SK-N-SH (cell line): ENCODE measurements at regions of chr9 and their contacts with region 1.

Region 1: DNA sequence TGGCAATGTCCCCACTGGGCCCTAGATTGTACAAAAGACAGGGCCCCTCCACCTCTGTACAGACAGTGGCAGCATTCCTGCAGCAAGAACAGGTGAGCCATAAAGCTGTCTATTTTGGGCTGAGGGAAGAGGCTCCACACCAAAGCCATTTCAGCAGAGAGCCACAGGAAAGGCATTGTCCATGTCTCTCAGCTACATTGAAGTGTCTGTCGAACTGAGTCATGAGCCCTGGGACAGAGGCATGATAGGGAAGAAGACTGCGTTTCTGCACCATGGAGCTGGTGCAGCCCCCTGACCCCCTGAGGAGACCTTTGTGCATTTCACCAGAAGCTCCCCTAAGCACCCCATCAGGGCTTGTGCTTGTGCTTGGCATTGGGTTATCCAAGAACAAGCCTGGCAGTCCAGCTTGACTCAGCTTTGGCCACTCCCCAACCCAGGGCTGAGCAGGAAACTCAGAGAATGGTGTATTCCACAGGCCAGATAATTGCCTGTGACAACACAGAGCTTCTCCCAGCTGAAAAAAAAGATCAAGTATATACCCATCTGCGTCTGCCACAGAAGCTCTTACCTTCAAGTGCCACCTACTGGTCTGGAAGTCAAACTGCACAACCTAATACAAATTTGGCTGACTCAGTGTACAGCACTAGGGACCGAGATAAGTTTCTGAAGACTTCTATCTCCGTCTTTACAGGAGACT is 5.9 kb upstream of the FRMD3 start:
- DNase-seq: peak; percentile 56
- H3K4me3 ChIP-seq: no peak overlapping the region; a peak in 1 of 4 replicates
- H3K27ac ChIP-seq: no peak overlapping the region
- H3K4me1 ChIP-seq: peaks cover 0 to 8% of the 10 kb centered on the region in 2 experiments; a peak in 1 of 4 replicates
- H3K27me3 ChIP-seq: no peaks in the 10 kb centered on the region
- CTCF ChIP-seq: peak; percentile 84
- EP300 ChIP-seq: no peak
- RAD21 ChIP-seq: peak; percentile 90

Region 2: DNA sequence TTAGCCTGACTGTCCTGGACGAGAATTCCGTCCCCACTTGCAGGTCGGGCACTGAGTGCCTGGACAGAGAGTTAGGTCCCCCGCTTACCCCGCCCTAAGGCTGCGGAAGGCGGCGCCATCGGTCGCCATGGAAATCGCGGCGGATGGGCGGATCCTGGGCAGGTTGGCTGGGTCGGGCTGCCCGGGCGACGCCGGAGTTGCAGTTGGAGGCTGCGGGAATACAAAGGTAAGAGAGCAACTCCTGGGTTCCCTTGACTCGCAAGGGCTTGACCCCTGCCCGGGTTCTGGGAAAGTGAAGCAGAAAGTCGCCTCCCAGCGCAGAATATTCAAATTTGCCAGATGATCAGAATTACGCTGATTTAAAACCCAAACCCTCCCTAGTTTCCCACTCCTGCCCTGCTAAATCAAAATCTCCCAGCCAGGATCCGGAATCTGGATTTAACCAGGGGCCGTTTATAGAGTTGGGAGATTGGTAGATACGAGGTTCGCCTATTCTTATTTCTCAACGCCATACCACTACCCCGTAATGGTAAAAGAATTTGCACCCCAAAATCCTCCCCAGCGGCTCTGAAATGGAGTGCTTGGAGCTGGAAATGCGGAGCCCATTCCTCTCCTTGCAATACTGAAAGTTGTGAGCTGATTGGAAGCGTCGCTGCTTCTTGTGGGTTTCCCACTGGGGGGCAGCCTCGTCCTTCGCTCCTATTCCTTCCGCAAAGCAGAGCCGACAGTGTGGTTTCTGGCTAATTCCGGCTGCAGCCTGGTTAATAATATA is 324.8 kb before region 1 on chr9:
- CTCF ChIA-PET with region 1: interaction called, 17 read pairs
- POLR2A ChIA-PET with region 1: no interaction called
- DNase-seq: peak; percentile 84
- H3K4me3 ChIP-seq: peak overlapping the region; percentile 80 to 83
- H3K27ac ChIP-seq: peak overlapping the region; percentile 57 to 93; a peak in 3 of 4 replicates
- H3K4me1 ChIP-seq: peaks cover 0 to 17% of the 10 kb centered on the region in 2 experiments; a peak in 3 of 4 replicates
- H3K27me3 ChIP-seq: no peaks in the 10 kb centered on the region
- CTCF ChIP-seq: peak; percentile 45
- EP300 ChIP-seq: no peak
- RAD21 ChIP-seq: peak; percentile 82

Region 3: GRCh38 chr9:83327323-83327722 is 216.8 kb before region 1 on chr9:
- CTCF ChIA-PET with region 1: interaction called, 111 read pairs
- POLR2A ChIA-PET with region 1: no interaction called
- DNase-seq: peak; percentile 55
- H3K4me3 ChIP-seq: no peak overlapping the region; a peak in 2 of 4 replicates
- H3K27ac ChIP-seq: peak overlapping the region; percentile 53 to 96; a peak in 3 of 4 replicates
- H3K4me1 ChIP-seq: peaks cover 6 to 19% of the 10 kb centered on the region in 2 experiments; a peak in 3 of 4 replicates
- H3K27me3 ChIP-seq: no peaks in the 10 kb centered on the region
- CTCF ChIP-seq: no peak
- EP300 ChIP-seq: no peak
- RAD21 ChIP-seq: 0 out of 2 replicates have a peak, but pooled peaks have one; percentile 19

Region 4: DNA sequence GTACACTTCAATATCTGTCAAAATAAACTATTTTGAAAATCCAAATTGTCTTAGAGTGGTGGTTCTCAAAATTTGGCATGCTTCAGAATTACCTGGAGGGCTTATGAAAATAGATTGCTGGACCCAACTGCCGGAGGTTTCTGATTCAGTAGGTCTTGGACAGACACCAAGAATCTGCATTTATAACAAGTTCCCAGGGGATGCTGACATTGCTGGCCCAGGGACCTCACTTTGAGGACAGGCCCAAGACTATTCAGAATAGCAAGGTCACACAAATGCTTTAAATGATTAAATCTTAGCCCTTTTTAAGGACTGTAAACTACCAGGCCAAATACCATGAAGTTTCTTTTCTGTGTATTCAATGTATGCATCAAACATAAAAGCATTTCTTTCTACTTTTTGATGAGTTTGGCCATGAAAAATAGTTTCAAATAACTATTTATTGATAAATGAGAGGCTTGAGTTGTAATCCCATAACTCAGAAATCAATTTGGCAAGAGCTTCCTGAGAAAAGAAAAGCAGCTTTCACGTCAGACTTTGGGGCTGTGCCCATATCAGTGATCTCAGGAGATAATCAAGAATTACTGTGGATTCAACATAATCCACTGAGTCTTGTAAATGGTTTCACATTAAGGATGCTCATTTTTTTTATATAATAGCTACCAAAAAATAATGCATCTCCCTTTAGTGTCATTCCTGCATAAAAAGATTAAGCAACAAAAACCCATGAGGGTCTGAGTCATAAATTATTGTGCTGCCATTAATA is 197.3 kb before region 1 on chr9:
- CTCF ChIA-PET with region 1: interaction called, 12 read pairs
- POLR2A ChIA-PET with region 1: no interaction called
- DNase-seq: no peak
- H3K4me3 ChIP-seq: no peak overlapping the region
- H3K27ac ChIP-seq: peak overlapping the region in 1 of 2 experiments; percentile 23; a peak in 1 of 4 replicates
- H3K4me1 ChIP-seq: peaks cover 0 to 27% of the 10 kb centered on the region in 2 experiments; a peak in 2 of 4 replicates
- H3K27me3 ChIP-seq: no peaks in the 10 kb centered on the region
- CTCF ChIP-seq: no peak
- EP300 ChIP-seq: no peak
- RAD21 ChIP-seq: no peak

Region 5: GRCh38 chr9:83560169-83560826 is 16.1 kb after region 1 on chr9:
- CTCF ChIA-PET with region 1: interaction called, 28 read pairs
- POLR2A ChIA-PET with region 1: no interaction called
- DNase-seq: no peak
- H3K4me3 ChIP-seq: no peak overlapping the region
- H3K27ac ChIP-seq: no peak overlapping the region
- H3K4me1 ChIP-seq: peaks cover 0 to 5% of the 10 kb centered on the region in 2 experiments; a peak in 2 of 4 replicates
- H3K27me3 ChIP-seq: no peaks in the 10 kb centered on the region; the same call in 1 of the 2 replicates
- CTCF ChIP-seq: no peak
- EP300 ChIP-seq: no peak
- RAD21 ChIP-seq: no peak